Endothelial cell of umbilical vein (primary cell): ENCODE measurements at regions of chr20 and their contacts with region 1.

Region 1: GRCh38 chr20:41617931-41618806 is at the start of gene CHD6:
- DNase-seq: peak; percentile 99
- H3K4me3 ChIP-seq: peak within 1 kb of the TSS; percentile 86 to 95 (median 90)
- H3K27ac ChIP-seq: peak within 1 kb of the TSS; percentile 67
- H3K4me1 ChIP-seq: peaks cover 8% of the 10 kb centered on the region
- H3K27me3 ChIP-seq: peaks cover 11 to 12% of the 10 kb centered on the region in 2 experiments
- CTCF ChIP-seq: no peak
- POLR2A ChIP-seq: no peak
- total RNA-seq, gene CHD6: 30.9 and 33.7 TPM in 2 replicates

Region 2: GRCh38 chr20:41476013-41476752 is 142.0 kb before region 1 on chr20:
- CTCF ChIA-PET with region 1: no interaction called
- POLR2A ChIA-PET with region 1: no interaction called
- dilution Hi-C with region 1: no loop called
- intact Hi-C with region 1: loop called (anchors 10 kb)
- DNase-seq: peak; percentile 97
- H3K4me3 ChIP-seq: no peak overlapping the region
- H3K27ac ChIP-seq: no peak overlapping the region
- H3K4me1 ChIP-seq: peaks cover 12% of the 10 kb centered on the region
- H3K27me3 ChIP-seq: no peaks in the 10 kb centered on the region
- CTCF ChIP-seq: no peak
- POLR2A ChIP-seq: no peak

Region 3: GRCh38 chr20:41499961-41500725 is 118.0 kb before region 1 on chr20:
- CTCF ChIA-PET with region 1: no interaction called
- POLR2A ChIA-PET with region 1: no interaction called
- dilution Hi-C with region 1: no loop called
- intact Hi-C with region 1: loop called (anchors 5 kb)
- DNase-seq: no peak
- H3K4me3 ChIP-seq: no peak overlapping the region
- H3K27ac ChIP-seq: no peak overlapping the region
- H3K4me1 ChIP-seq: no peaks in the 10 kb centered on the region
- H3K27me3 ChIP-seq: no peaks in the 10 kb centered on the region
- CTCF ChIP-seq: no peak
- POLR2A ChIP-seq: no peak

Region 4: GRCh38 chr20:41572010-41572560 is 46.1 kb before region 1 on chr20:
- CTCF ChIA-PET with region 1: no interaction called
- POLR2A ChIA-PET with region 1: interaction called, 3 read pairs
- dilution Hi-C with region 1: no loop called
- intact Hi-C with region 1: loop called (anchors 5 kb)
- DNase-seq: no peak
- H3K4me3 ChIP-seq: no peak overlapping the region
- H3K27ac ChIP-seq: no peak overlapping the region
- H3K4me1 ChIP-seq: peaks cover 28% of the 10 kb centered on the region
- H3K27me3 ChIP-seq: no peaks in the 10 kb centered on the region
- CTCF ChIP-seq: peak in 1 of 2 donors; percentile 15
- POLR2A ChIP-seq: no peak

Region 5: DNA sequence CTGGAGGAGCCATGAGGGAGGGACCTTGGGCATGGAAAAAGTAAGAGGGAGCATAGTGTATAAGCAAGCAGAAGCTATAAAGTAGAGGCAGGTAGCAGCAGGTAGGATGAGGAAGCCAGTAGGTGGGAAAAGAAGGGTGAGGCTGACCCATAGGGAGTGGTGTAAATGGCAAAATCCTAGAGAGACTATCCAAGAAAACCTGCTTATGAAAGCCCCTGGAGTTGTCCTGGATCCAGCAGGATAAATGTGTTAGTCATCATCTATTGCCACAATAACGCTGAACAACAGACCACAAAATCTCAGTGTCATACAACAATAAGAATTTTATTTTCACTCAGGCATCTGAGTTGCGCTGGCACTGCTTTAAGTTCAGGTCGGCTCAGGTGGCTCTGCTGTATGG is 30.2 kb before region 1 on chr20:
- CTCF ChIA-PET with region 1: no interaction called
- POLR2A ChIA-PET with region 1: no interaction called
- dilution Hi-C with region 1: no loop called
- intact Hi-C with region 1: no loop called
- DNase-seq: no peak
- H3K4me3 ChIP-seq: no peak overlapping the region
- H3K27ac ChIP-seq: no peak overlapping the region
- H3K4me1 ChIP-seq: no peaks in the 10 kb centered on the region
- H3K27me3 ChIP-seq: no peaks in the 10 kb centered on the region
- CTCF ChIP-seq: no peak
- POLR2A ChIP-seq: no peak